WTC11 (cell line): ENCODE measurements at regions of chr7 and their contacts with region 1.

Region 1: DNA sequence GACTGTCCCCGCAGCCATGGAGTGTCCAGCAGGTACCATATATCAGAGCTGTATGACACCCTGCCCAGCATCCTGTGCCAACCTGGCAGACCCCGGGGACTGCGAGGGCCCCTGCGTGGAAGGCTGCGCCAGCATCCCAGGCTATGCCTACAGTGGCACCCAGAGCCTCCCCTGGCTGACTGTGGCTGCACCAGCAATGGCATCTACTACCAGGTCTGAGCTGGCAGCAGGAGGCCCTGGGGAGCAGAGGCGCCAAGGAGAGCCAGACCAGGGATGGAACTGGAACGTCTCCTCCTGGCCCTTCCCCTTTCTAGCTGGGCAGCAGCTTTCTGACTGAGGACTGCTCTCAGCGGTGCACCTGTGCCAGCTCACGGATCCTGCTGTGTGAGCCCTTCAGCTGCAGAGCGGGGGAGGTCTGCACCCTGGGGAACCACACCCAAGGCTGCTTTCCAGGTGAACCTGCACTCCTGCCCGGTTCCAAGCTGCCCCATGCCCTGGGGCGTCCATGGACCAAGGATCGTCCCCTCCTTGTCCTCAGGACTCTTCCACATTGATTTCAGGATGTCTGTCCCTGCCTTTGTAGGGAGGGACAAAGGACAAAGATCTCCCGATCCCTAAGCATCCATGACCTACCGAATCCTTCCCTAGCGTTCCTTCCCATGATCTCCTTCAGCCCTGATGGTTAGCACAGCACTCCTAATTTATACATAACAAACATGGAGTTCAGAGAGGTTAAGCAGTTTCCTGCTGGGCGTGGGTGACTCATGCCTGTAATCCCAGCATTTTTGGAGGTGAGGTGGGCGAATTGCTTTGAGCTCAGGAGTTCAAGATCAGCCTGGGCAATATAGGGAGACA is 33.3 kb downstream of the EPHB4 start:
- DNase-seq: no peak
- ATAC-seq: peak; percentile 36
- H3K4me3 Mint-ChIP-seq: peak overlapping the region; percentile 33; the same call in 1 of the 2 replicates
- H3K27ac Mint-ChIP-seq: no peak overlapping the region
- H3K4me1 Mint-ChIP-seq: peaks cover 15% of the 10 kb centered on the region
- H3K27me3 Mint-ChIP-seq: no peaks in the 10 kb centered on the region; the same call in 1 of the 2 replicates
- CTCF ChIP-seq: no peak

Region 2: DNA sequence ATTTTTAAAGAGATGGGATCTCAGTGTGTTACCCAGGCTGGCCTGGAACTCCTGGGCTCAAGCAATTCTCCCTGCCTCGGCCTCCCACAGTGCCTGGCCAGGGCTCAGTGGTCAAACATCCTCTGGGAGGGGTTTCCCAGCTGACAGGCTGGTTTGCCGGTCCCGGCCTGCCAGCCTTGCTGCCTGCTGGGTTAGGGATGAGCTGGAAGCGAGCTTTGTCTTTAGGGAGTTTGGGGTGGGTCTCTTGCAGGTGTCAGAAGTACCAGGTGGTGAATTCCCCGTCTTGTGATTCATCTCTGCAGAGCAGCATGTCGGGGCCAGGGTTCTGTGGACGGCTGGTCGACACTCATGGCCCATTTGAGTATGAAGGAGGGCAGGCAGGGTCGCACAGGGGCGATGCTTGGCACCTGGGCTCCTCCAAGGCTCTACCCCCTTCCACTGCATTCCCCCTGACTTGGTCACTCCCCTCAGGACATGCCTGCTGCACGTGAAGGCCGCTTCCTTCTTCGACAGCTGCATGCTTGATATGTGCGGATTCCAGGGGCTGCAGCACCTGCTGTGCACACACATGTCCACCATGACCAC is 30.4 kb before region 1 on chr7:
- CTCF ChIA-PET with region 1: interaction called, 11 read pairs
- POLR2A ChIA-PET with region 1: no interaction called
- DNase-seq: no peak
- ATAC-seq: no peak
- H3K4me3 Mint-ChIP-seq: no peak overlapping the region
- H3K27ac Mint-ChIP-seq: no peak overlapping the region
- H3K4me1 Mint-ChIP-seq: 0 out of 2 replicates have a peak, but pooled peaks cover 2% of the 10 kb centered on the region
- H3K27me3 Mint-ChIP-seq: no peaks in the 10 kb centered on the region
- CTCF ChIP-seq: no peak